A549 (cell line): ENCODE measurements at regions of chr1 and their contacts with region 1.

Region 1: GRCh38 chr1:201436393-201436792 is 14.9 kb upstream of the TNNI1 start:
- DNase-seq: peak; percentile 62 to 68
- ATAC-seq: peak; percentile 99
- H3K4me3 ChIP-seq: no peak overlapping the region
- H3K27ac ChIP-seq: peak overlapping the region; percentile 21 to 58; a peak in 3 of 6 replicates
- H3K4me1 ChIP-seq: peaks cover 14% of the 10 kb centered on the region
- CTCF ChIP-seq: no peak
- EP300 ChIP-seq: no peak
- POLR2A ChIP-seq: no peak
- RAD21 ChIP-seq: peak; percentile 13 to 43; a peak in 2 of 5 replicates

Region 2: GRCh38 chr1:201408176-201408833 is 28.1 kb before region 1 on chr1:
- CTCF ChIA-PET with region 1: interaction called, 75 read pairs
- POLR2A ChIA-PET with region 1: no interaction called
- DNase-seq: peak; percentile 80 to 93
- ATAC-seq: peak; percentile 74 to 91
- H3K4me3 ChIP-seq: no peak overlapping the region
- H3K27ac ChIP-seq: peak overlapping the region; percentile 82 to 92
- H3K4me1 ChIP-seq: peaks cover 57% of the 10 kb centered on the region
- CTCF ChIP-seq: peak; percentile 95
- EP300 ChIP-seq: no peak
- POLR2A ChIP-seq: no peak
- RAD21 ChIP-seq: peak; percentile 88

Region 3: GRCh38 chr1:201456499-201457309 is 20.3 kb after region 1 on chr1:
- CTCF ChIA-PET with region 1: interaction called, 158 read pairs
- POLR2A ChIA-PET with region 1: interaction called, 18 read pairs
- DNase-seq: peak in 1 of 2 experiments; percentile 84
- ATAC-seq: peak; percentile 45 to 61
- H3K4me3 ChIP-seq: no peak overlapping the region
- H3K27ac ChIP-seq: peak overlapping the region; percentile 78 to 88
- H3K4me1 ChIP-seq: peaks cover 51% of the 10 kb centered on the region
- CTCF ChIP-seq: no peak
- EP300 ChIP-seq: peak in 1 of 2 experiments; percentile 17; a peak in 1 of 5 replicates
- POLR2A ChIP-seq: no peak
- RAD21 ChIP-seq: no peak

Region 4: DNA sequence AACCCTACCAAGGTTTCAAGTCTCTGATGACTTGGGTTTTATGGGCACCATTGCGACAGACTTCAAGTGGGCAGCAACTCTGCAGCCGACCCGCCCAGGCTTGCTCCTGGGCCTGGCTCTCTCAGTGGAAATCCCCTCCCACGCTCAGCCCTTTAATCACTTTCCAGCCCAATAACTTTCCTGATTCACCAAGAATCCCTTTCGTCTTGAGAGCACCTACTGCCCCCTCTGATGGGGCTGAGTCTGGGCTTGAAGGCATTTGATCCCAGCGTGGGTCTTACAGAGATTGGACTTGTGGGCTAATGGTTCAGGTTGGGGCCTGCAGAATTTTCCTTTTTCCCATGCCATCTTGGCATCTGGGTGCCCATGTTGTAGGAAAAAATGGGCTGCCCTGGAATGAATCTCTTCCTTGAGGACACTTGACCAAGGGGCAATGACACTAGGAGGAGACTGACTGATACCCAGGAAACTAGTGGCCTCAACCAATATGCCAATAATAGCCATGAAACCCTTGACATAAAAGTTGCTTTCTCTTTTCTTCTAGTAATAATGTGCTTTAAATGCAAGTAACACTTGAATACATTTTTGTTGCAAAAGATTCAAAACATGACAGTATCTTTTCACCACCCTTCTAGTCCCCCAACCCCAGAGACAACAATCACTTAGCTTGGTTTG is 40.4 kb after region 1 on chr1:
- CTCF ChIA-PET with region 1: interaction called, 318 read pairs
- POLR2A ChIA-PET with region 1: no interaction called
- DNase-seq: no peak
- ATAC-seq: no peak
- H3K4me3 ChIP-seq: no peak overlapping the region
- H3K27ac ChIP-seq: peak overlapping the region; percentile 37 to 75; a peak in 4 of 6 replicates
- H3K4me1 ChIP-seq: peaks cover 52% of the 10 kb centered on the region
- CTCF ChIP-seq: no peak
- EP300 ChIP-seq: no peak
- POLR2A ChIP-seq: no peak
- RAD21 ChIP-seq: no peak

Region 5: DNA sequence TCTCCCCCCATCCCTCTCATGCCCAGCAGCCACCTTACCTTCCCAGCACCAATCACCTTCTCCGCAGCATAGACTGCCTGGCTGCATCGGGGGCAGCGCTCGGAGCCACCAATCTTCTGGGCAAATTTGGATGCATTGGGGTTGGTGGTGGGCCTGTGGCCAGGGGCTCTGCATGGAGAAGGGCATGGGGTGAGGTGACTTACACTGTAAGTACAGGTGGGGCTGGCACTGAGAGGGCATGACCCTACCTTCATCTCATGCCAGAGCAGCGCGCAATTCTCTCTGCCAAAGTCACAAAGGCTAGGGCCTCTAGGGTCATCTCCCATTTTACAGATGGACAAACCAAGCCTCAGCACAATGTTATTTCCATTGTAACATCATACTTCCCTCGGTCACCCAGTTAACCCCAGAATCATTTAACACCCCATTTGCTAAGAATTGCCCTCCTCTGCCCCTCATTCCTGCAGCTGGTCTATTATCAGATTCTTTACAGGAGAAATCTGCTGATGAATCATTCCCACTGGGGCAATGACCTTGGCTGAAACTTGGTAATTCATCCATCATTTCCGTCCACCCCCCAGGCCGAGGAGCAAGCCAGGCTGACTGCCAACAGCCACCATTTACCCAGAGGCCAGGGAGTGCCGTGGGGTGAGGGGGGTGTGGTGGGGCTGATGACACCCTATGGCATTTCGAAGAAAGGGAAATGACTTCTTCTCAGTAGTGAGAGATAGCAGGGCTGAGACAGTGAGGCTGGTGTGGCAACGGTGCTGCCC is 52.6 kb after region 1 on chr1:
- CTCF ChIA-PET with region 1: interaction called, 24 read pairs
- POLR2A ChIA-PET with region 1: no interaction called
- DNase-seq: peak; percentile 88 to 90
- ATAC-seq: peak; percentile 66 to 76
- H3K4me3 ChIP-seq: peak overlapping the region; percentile 26
- H3K27ac ChIP-seq: peak overlapping the region; percentile 86 to 90
- H3K4me1 ChIP-seq: peaks cover 84% of the 10 kb centered on the region
- CTCF ChIP-seq: no peak
- EP300 ChIP-seq: peak; percentile 71 to 91; a peak in 3 of 5 replicates
- POLR2A ChIP-seq: no peak
- RAD21 ChIP-seq: 0 out of 5 replicates have a peak, but pooled peaks of 1 of the 2 experiments have one; percentile 15

Region 6: GRCh38 chr1:201551877-201552731 is 115.7 kb after region 1 on chr1:
- CTCF ChIA-PET with region 1: no interaction called
- POLR2A ChIA-PET with region 1: no interaction called
- DNase-seq: peak; percentile 57 to 69
- ATAC-seq: peak; percentile 75 to 78
- H3K4me3 ChIP-seq: no peak overlapping the region
- H3K27ac ChIP-seq: peak overlapping the region; percentile 59 to 86
- H3K4me1 ChIP-seq: peaks cover 11% of the 10 kb centered on the region
- CTCF ChIP-seq: no peak
- EP300 ChIP-seq: no peak
- POLR2A ChIP-seq: no peak
- RAD21 ChIP-seq: no peak

Region 7: GRCh38 chr1:201807958-201808632 is 371.7 kb after region 1 on chr1:
- CTCF ChIA-PET with region 1: no interaction called
- POLR2A ChIA-PET with region 1: no interaction called
- DNase-seq: no peak
- ATAC-seq: no peak
- H3K4me3 ChIP-seq: no peak overlapping the region
- H3K27ac ChIP-seq: no peak overlapping the region
- H3K4me1 ChIP-seq: no peaks in the 10 kb centered on the region
- CTCF ChIP-seq: no peak
- EP300 ChIP-seq: no peak
- POLR2A ChIP-seq: no peak
- RAD21 ChIP-seq: no peak

Region 8: GRCh38 chr1:201838381-201838780 is 402.0 kb after region 1 on chr1:
- CTCF ChIA-PET with region 1: no interaction called
- POLR2A ChIA-PET with region 1: no interaction called
- DNase-seq: no peak
- ATAC-seq: no peak
- H3K4me3 ChIP-seq: no peak overlapping the region
- H3K27ac ChIP-seq: no peak overlapping the region
- H3K4me1 ChIP-seq: peaks cover 14% of the 10 kb centered on the region
- CTCF ChIP-seq: no peak
- EP300 ChIP-seq: no peak
- POLR2A ChIP-seq: no peak
- RAD21 ChIP-seq: no peak

Region 9: DNA sequence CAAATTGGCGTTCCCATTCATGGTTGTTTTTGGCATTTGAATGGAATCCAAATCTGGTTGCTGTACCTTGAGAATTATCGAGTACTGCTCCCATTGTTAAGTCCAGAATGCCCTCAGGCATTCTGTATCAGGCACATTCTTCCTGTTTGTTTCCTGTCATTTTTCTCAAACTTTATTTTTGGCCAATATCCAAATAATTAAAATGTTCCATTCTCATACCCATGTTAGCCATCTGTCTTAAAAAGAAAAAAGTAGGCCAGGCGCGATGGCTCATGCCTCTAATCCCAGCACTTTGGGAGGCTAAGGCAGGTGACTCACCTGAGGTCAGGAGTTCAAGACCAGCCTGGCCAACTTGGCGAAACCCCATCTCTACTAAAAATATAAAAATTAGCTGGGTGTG is 423.0 kb after region 1 on chr1:
- CTCF ChIA-PET with region 1: no interaction called
- POLR2A ChIA-PET with region 1: no interaction called
- DNase-seq: no peak
- ATAC-seq: no peak
- H3K4me3 ChIP-seq: no peak overlapping the region
- H3K27ac ChIP-seq: no peak overlapping the region
- H3K4me1 ChIP-seq: no peaks in the 10 kb centered on the region
- CTCF ChIP-seq: no peak
- EP300 ChIP-seq: no peak
- POLR2A ChIP-seq: no peak
- RAD21 ChIP-seq: no peak